MCF 10A (cell line): ENCODE measurements at regions of chr5 and their contacts with region 1.

Region 1: DNA sequence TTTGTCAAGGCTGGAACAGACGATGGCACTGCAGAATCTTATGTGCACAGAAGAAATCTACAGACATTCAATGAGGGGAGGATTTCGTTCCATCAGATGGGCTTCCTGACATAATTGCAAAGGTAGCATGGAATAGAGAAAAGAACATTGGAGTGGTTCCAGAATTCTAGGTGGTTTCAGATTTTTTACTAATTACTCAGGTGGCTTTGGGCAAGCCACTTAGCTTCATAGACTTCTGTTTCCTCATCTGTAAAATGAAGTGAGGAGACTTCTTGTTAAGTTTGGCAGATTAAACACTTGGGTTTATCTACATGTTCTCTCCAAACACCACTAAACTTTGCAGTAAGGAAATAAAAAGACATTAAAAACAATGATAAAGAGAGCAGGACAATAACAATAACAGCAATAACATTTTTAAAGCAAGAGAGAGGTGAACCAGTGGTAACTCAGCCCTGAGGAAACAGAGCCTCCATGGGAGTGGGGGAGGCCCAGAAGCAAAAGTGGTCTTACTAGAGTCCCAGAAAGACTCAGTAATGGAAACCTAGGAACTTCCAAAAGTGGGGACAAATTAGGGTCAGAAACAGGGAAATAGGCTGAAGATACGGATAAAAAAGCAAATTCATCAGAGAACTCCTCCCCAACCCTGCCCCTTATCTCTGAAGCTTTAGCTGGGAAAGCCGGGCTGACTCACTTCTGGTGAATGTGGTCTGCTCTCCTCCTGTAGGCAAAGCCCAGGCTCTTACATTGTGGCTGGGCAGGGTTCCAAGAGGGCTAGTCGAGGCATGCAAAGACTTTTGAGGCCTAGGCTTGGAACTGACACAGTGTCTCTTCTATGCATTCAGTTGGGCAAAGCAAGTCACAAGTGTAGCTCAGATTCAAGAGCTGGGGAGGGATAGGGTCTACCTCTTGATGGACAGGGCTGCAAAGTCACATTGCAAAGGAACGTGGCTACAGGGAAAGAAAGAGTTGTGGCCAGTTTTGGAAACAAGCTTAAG is 11.8 kb upstream of the ACTBL2 start:
- DNase-seq: peak; percentile 99
- H3K4me3 Mint-ChIP-seq: peak overlapping the region; percentile 32
- H3K27ac Mint-ChIP-seq: peak overlapping the region; percentile 84
- H3K4me1 Mint-ChIP-seq: peaks cover 42% of the 10 kb centered on the region
- H3K27me3 Mint-ChIP-seq: no peaks in the 10 kb centered on the region
- CTCF ChIP-seq: no peak

Region 2: GRCh38 chr5:57176350-57176857 is 318.0 kb before region 1 on chr5:
- CTCF ChIA-PET with region 1: no interaction called
- POLR2A ChIA-PET with region 1: no interaction called
- intact Hi-C with region 1: no loop called
- DNase-seq: peak; percentile 36
- H3K4me3 Mint-ChIP-seq: peak overlapping the region; percentile 97
- H3K27ac Mint-ChIP-seq: peak overlapping the region; percentile 99
- H3K4me1 Mint-ChIP-seq: peaks cover 26% of the 10 kb centered on the region
- H3K27me3 Mint-ChIP-seq: no peaks in the 10 kb centered on the region
- CTCF ChIP-seq: no peak

Region 3: DNA sequence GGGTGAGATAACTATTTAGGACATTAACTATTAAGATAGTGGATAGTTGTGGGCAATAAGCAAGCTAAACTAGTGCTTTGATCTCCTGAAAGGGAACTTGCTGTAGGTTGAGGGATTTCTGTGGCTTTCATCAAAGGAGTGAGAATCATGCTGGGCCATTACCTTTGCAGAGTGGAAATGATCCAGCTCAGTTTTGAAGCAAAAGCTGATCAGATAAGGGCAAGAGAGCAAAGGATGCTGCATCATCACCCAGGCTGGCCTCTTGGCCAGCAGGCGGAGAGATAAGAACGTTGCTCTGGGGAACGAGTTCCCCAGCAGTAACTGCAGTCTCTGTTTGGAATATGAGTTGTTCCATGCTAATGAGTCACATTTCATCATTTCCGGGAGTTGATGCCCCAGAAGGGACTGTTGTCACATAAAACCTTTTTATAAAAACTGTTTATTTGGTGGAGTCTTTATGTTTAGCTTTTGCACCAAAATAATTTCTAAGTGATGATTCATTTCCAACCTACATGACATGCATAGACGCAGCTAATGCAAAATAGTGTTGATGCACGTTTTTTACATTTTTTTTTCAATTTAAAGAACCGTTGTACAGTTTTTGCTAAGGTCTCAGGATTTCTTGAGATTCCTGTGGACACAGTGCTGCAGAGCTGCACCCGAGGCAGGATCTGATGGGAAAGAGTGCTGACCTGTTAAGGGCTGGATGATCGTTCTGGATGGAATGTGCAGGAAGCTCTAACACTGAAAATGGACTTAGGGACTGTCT is 111.1 kb before region 1 on chr5:
- CTCF ChIA-PET with region 1: interaction called, 3 read pairs
- POLR2A ChIA-PET with region 1: interaction called, 5 read pairs
- intact Hi-C with region 1: loop called (anchors 5 kb)
- DNase-seq: peak; percentile 73
- H3K4me3 Mint-ChIP-seq: peak overlapping the region; percentile 12
- H3K27ac Mint-ChIP-seq: no peak overlapping the region
- H3K4me1 Mint-ChIP-seq: peaks cover 12% of the 10 kb centered on the region
- H3K27me3 Mint-ChIP-seq: no peaks in the 10 kb centered on the region
- CTCF ChIP-seq: peak; percentile 27

Region 4: GRCh38 chr5:57432876-57433275 is 61.5 kb before region 1 on chr5:
- CTCF ChIA-PET with region 1: interaction called, 9 read pairs
- POLR2A ChIA-PET with region 1: interaction called, 5 read pairs
- intact Hi-C with region 1: loop called (anchors 2 kb)
- DNase-seq: peak; percentile 50
- H3K4me3 Mint-ChIP-seq: no peak overlapping the region
- H3K27ac Mint-ChIP-seq: no peak overlapping the region
- H3K4me1 Mint-ChIP-seq: peaks cover 27% of the 10 kb centered on the region
- H3K27me3 Mint-ChIP-seq: no peaks in the 10 kb centered on the region
- CTCF ChIP-seq: peak; percentile 42

Region 5: GRCh38 chr5:57470339-57470738 is 24.1 kb before region 1 on chr5:
- CTCF ChIA-PET with region 1: interaction called, 5 read pairs
- POLR2A ChIA-PET with region 1: interaction called, 12 read pairs
- intact Hi-C with region 1: no loop called
- DNase-seq: no peak
- H3K4me3 Mint-ChIP-seq: no peak overlapping the region
- H3K27ac Mint-ChIP-seq: no peak overlapping the region
- H3K4me1 Mint-ChIP-seq: peaks cover 13% of the 10 kb centered on the region
- H3K27me3 Mint-ChIP-seq: no peaks in the 10 kb centered on the region
- CTCF ChIP-seq: no peak

Region 6: DNA sequence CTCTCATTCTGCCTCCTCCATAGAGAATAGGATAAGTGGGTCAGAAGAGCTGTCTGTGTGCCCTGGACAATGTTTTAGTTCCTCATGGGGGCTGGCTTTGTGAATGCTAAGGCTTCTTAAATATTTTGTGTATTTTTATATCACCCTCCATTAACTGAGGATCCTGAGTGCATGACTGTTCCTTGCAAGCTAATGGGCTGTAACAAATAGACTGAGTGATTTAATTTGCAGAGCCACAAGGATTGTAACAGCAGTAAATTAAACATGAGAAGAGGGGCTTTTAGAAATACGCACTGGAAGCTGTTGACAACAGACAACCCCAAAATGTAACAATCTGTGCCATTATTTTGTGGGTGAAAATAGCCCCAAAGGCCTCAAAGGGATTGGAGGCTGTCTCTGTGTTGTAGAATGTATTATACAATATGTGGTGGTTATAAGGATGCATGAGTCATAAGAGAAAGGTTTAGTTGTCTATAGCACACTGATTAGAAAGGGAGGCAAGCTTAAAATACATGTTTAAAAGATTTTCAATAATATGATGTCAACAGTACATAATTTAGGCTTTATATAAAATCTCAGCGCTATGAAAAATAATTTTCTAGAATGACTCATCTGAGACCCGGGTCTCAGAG is 140.9 kb after region 1 on chr5:
- CTCF ChIA-PET with region 1: no interaction called
- POLR2A ChIA-PET with region 1: no interaction called
- intact Hi-C with region 1: no loop called
- DNase-seq: no peak
- H3K4me3 Mint-ChIP-seq: no peak overlapping the region
- H3K27ac Mint-ChIP-seq: no peak overlapping the region
- H3K4me1 Mint-ChIP-seq: no peaks in the 10 kb centered on the region
- H3K27me3 Mint-ChIP-seq: peaks cover 17% of the 10 kb centered on the region
- CTCF ChIP-seq: no peak

Region 7: DNA sequence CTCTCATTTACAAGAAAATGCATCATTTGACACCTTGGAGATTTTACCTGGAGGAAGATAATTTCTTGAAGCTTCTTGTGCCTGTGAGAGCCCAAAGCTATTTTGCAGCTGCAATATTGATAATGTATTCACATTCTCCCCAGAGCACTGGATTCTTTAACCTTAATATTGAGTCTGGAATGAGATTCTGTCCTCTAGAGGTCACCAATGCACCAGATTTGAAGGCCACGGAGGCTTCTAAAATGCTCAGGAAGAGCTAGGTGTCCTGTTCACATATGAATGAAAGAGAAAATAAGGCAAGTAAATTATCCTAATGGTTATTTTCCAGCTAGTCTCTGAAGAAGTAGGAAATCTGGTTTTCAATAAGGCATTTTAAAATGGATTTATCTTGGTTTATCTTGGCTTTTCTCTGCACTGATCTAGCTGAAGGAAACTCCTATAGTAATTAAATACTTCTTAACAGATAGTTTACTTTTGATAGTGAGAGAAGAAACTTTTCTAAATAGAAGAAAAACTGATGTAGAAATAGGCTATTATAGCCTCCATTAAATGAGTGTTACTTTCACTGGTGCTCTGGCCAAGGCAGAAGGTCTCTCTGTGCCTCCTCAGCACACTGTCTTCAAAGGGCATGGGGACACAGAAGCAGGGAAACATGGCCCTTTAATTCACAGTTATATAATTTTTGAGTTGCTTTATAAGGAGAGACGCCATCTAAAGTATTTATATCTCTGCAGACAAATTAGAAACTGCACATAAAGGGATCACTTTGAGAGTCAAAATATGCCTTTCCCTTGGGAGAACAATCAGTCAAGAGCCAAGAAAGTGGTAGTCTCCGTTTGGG is 285.2 kb after region 1 on chr5:
- CTCF ChIA-PET with region 1: interaction called, 74 read pairs
- POLR2A ChIA-PET with region 1: interaction called, 3 read pairs
- intact Hi-C with region 1: loop called (anchors 1 kb)
- DNase-seq: peak; percentile 78
- H3K4me3 Mint-ChIP-seq: no peak overlapping the region
- H3K27ac Mint-ChIP-seq: no peak overlapping the region
- H3K4me1 Mint-ChIP-seq: peaks cover 6% of the 10 kb centered on the region
- H3K27me3 Mint-ChIP-seq: no peaks in the 10 kb centered on the region
- CTCF ChIP-seq: peak; percentile 64

Region 8: GRCh38 chr5:58571501-58571900 is 1077.1 kb after region 1 on chr5:
- CTCF ChIA-PET with region 1: no interaction called
- POLR2A ChIA-PET with region 1: no interaction called
- intact Hi-C with region 1: no loop called
- DNase-seq: no peak
- H3K4me3 Mint-ChIP-seq: no peak overlapping the region
- H3K27ac Mint-ChIP-seq: no peak overlapping the region
- H3K4me1 Mint-ChIP-seq: no peaks in the 10 kb centered on the region
- H3K27me3 Mint-ChIP-seq: peaks cover 84% of the 10 kb centered on the region
- CTCF ChIP-seq: no peak